Cardiac septum (tissue), 1 donor: ENCODE measurements at regions of chr14 and their contacts with region 1.

Region 1: DNA sequence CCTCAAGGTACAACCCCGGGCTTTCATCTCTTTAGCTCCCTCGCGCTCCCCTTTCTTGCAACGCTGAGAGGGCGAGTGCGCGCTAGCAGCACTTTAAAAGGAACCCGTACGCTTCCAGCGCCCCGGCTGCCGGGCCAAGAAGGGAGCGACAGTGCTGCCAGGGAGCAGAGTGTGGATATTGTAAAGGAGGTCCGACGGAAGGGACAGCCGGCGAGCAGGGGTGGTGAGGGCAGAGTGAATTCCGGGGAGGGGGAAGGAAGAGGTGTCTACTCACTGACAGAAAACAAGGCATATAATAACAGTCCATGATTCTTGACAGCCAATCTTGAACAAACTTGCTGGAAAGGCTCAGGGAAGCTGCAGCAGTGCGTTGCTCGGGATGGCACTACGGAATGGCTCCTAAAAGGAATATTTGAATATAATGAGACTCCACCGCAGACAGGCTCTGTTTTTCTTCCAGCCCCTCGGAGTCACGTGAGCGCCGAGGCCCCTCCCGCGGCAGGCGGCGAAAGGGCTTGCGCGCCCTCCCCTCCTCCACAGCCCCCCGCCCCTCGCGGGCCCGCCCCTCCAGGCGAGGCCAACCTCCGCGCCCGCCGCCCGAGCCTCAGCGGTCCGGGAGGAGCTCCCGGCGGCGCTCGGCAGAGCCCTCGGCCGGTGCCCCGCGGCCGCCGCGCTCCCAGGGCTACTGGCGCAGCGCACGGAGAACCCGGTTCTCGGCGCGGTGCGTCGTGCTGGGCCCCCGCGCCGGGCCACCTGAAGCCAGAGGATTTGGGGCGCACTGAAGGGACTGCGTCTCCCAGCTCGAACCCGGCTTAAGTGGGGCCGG is 3.4 kb downstream of the BMP4 start:
- DNase-seq: peak; percentile 89

Region 2: DNA sequence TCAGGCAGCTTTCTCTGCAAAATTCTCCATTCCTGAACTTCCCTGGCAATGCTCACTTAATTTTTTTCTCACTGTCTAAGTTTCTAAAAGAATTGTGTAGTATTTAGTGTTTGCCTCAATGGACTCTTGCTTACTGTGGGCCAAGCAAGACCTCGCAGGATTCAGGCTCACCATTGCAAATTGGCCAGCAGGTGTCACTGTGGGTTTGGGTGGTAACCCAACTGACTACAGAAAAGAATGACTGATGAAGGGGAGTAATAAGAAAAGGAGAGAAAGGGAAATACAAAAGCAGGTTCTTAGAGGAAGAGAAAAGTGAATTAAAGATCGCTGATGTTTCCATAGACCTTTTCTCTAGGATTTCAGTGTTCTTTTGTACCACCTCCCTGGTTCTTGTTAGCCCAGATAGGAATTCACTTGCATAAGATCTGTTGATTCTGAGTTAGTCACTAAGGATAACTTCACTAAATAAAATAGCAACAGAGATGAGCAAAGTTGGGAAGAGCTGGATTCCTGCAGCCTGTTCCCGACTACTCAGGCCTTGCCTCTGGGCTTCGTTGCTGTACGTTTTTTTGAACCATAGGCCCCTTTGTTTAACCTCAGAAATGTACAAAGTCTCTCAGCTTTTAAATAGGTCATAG is 413.6 kb before region 1 on chr14:
- intact Hi-C with region 1: loop called (anchors 10 kb)
- DNase-seq: peak; percentile 78

Region 3: GRCh38 chr14:53715193-53715721 is 238.0 kb before region 1 on chr14:
- intact Hi-C with region 1: loop called (anchors 10 kb)
- DNase-seq: no peak

Region 4: GRCh38 chr14:54173802-54174201 is 220.6 kb after region 1 on chr14:
- intact Hi-C with region 1: loop called (anchors 5 kb)
- DNase-seq: no peak

Region 5: DNA sequence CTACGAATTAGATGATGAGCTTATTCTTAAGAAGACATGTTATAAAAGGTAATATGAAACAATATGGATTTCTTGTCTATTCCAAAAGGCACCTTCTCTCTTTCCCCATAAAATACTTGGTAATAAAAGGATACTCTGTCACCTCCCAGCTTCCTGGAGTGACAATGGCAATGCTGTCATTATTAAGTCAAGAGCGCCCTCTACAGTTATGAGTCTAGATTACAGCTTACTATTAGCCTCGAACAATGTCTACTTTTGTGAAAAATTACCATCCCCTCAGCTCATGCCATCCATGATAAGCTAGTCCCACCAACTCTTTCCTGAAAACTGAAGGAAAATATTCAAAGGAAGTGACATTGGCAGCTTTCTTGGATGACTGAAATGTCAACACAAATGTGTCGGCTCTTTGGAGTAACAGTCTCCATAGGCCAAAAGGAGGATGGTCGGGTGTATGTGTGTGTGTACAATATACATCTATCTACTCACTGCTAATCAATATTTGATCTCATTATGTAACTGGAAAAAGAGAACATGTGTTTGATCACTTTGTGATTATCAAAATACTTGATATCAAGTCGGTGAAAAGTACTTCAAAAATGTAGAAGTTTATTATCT is 394.9 kb after region 1 on chr14:
- intact Hi-C with region 1: loop called (anchors 10 kb)
- DNase-seq: no peak